ENCODE measurements at regions of chr10 and their contacts with region 1.

Region 1: GRCh38 chr10:89029785-89030437 is 39.3 kb downstream of the FAS start:
- DNase-seq: peak; percentile 78
- H3K4me3 Mint-ChIP-seq: no peak overlapping the region
- H3K27ac Mint-ChIP-seq: no peak overlapping the region
- H3K4me1 Mint-ChIP-seq: peaks cover 41% of the 10 kb centered on the region
- H3K27me3 Mint-ChIP-seq: no peaks in the 10 kb centered on the region

Region 2: GRCh38 chr10:88386821-88387773 is 642.8 kb before region 1 on chr10:
- CTCF ChIA-PET with region 1: no interaction called
- POLR2A ChIA-PET with region 1: no interaction called
- intact Hi-C with region 1: no loop called
- DNase-seq: no peak
- H3K4me3 Mint-ChIP-seq: no peak overlapping the region
- H3K27ac Mint-ChIP-seq: peak overlapping the region; percentile 42
- H3K4me1 Mint-ChIP-seq: peaks cover 16% of the 10 kb centered on the region
- H3K27me3 Mint-ChIP-seq: no peaks in the 10 kb centered on the region

Region 3: DNA sequence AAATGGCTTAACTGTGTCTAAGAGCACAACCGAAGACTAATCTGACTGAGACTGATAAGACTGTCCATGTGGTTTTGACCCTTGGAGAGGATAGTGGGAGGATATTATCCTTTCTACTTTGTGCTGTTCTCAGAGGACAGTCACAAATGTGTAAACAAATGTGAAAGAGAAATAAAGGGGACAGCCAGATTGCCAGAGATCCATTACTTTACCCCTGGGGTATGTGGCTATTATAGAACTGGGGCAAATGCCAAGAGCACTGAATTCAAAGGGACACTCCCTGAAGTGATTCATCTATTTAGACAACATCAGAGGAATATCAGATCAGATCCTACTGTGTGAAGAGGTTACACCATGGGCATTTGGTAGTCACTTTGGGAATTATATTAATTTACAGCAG is 601.5 kb before region 1 on chr10:
- CTCF ChIA-PET with region 1: no interaction called
- POLR2A ChIA-PET with region 1: no interaction called
- intact Hi-C with region 1: no loop called
- DNase-seq: no peak
- H3K4me3 Mint-ChIP-seq: no peak overlapping the region
- H3K27ac Mint-ChIP-seq: no peak overlapping the region
- H3K4me1 Mint-ChIP-seq: peaks cover 9% of the 10 kb centered on the region
- H3K27me3 Mint-ChIP-seq: no peaks in the 10 kb centered on the region

Region 4: DNA sequence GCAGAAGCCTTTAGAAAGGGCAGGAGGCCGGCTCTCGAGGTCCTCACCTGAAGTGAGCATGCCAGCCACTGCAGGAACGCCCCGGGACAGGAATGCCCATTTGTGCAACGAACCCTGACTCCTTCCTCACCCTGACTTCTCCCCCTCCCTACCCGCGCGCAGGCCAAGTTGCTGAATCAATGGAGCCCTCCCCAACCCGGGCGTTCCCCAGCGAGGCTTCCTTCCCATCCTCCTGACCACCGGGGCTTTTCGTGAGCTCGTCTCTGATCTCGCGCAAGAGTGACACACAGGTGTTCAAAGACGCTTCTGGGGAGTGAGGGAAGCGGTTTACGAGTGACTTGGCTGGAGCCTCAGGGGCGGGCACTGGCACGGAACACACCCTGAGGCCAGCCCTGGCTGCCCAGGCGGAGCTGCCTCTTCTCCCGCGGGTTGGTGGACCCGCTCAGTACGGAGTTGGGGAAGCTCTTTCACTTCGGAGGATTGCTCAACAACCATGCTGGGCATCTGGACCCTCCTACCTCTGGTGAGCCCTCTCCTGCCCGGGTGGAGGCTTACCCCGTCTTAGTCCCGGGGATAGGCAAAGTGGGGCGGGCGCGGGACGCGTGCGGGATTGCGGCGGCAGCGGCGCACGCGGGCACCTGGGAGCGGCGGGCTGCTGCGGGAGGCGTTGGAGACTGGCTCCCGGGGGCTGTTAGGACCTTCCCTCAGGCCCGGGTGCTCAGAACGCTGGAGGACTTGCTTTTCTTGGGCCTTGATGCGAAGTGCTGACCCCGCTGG is 39.3 kb before region 1 on chr10 and contains the start of gene FAS:
- CTCF ChIA-PET with region 1: interaction called, 10 read pairs
- POLR2A ChIA-PET with region 1: interaction called, 7 read pairs
- intact Hi-C with region 1: loop called (anchors 1 kb)
- DNase-seq: peak; percentile 94
- H3K4me3 Mint-ChIP-seq: peak within 1 kb of the TSS; percentile 86
- H3K27ac Mint-ChIP-seq: peak within 1 kb of the TSS; percentile 96
- H3K4me1 Mint-ChIP-seq: peaks cover 65% of the 10 kb centered on the region
- H3K27me3 Mint-ChIP-seq: no peaks in the 10 kb centered on the region
- total RNA-seq, gene FAS: 62.2 to 63.5 TPM

Region 5: GRCh38 chr10:89069589-89069988 is 39.7 kb after region 1 on chr10:
- CTCF ChIA-PET with region 1: interaction called, 10 read pairs
- POLR2A ChIA-PET with region 1: interaction called, 3 read pairs
- intact Hi-C with region 1: no loop called
- DNase-seq: no peak
- H3K4me3 Mint-ChIP-seq: no peak overlapping the region
- H3K27ac Mint-ChIP-seq: no peak overlapping the region
- H3K4me1 Mint-ChIP-seq: no peaks in the 10 kb centered on the region
- H3K27me3 Mint-ChIP-seq: peaks cover 8% of the 10 kb centered on the region

Region 6: GRCh38 chr10:89086801-89087521 is 57.0 kb after region 1 on chr10:
- CTCF ChIA-PET with region 1: interaction called, 8 read pairs
- POLR2A ChIA-PET with region 1: no interaction called
- intact Hi-C with region 1: loop called (anchors 1 kb)
- DNase-seq: peak; percentile 50
- H3K4me3 Mint-ChIP-seq: no peak overlapping the region
- H3K27ac Mint-ChIP-seq: no peak overlapping the region
- H3K4me1 Mint-ChIP-seq: peaks cover 8% of the 10 kb centered on the region
- H3K27me3 Mint-ChIP-seq: no peaks in the 10 kb centered on the region

Region 7: GRCh38 chr10:89163265-89163995 is 133.5 kb after region 1 on chr10:
- CTCF ChIA-PET with region 1: interaction called, 12 read pairs
- POLR2A ChIA-PET with region 1: no interaction called
- intact Hi-C with region 1: loop called (anchors 1 kb)
- DNase-seq: peak; percentile 76
- H3K4me3 Mint-ChIP-seq: peak overlapping the region; percentile 10
- H3K27ac Mint-ChIP-seq: peak overlapping the region; percentile 35
- H3K4me1 Mint-ChIP-seq: peaks cover 42% of the 10 kb centered on the region
- H3K27me3 Mint-ChIP-seq: peaks cover 15% of the 10 kb centered on the region

Region 8: DNA sequence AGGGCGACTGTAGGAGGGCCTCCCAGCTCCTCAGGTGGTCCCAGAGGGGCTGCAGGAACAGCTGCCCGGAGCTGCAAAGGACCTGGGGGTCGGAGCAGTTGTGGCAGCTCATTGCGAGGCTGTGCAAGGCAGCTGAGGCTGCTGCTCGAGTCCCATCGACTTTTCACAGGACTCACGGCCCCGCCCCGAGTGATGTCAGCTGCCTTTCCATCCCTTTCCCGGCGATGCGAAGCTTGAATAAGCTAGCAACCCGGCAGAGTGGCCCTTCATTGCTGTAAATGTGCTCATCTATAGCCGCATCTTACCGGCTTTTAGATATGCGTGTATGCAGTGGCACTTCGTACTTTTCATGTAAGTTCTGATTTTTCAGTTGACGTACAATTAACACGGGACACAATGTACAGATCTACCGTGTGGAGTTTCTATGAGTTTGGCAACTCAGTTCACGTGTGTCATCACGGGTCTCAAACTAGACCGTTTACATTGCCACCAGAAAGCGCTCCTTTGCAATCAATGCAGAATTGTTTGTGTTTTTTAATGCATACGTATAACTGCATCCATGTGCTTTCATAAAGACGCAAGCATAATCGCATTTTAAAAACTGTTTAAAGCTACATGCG is 177.4 kb after region 1 on chr10 and contains the start of gene CH25H:
- CTCF ChIA-PET with region 1: interaction called, 114 read pairs
- POLR2A ChIA-PET with region 1: no interaction called
- intact Hi-C with region 1: no loop called
- DNase-seq: peak; percentile 71
- H3K4me3 Mint-ChIP-seq: peak within 1 kb of the TSS; percentile 64
- H3K27ac Mint-ChIP-seq: no peak within 1 kb of the TSS
- H3K4me1 Mint-ChIP-seq: peaks cover 11% of the 10 kb centered on the region
- H3K27me3 Mint-ChIP-seq: peaks cover 29% of the 10 kb centered on the region
- total RNA-seq, gene CH25H: 0.12 TPM in 1 of 2 experiments, not detected in the other

Region 9: DNA sequence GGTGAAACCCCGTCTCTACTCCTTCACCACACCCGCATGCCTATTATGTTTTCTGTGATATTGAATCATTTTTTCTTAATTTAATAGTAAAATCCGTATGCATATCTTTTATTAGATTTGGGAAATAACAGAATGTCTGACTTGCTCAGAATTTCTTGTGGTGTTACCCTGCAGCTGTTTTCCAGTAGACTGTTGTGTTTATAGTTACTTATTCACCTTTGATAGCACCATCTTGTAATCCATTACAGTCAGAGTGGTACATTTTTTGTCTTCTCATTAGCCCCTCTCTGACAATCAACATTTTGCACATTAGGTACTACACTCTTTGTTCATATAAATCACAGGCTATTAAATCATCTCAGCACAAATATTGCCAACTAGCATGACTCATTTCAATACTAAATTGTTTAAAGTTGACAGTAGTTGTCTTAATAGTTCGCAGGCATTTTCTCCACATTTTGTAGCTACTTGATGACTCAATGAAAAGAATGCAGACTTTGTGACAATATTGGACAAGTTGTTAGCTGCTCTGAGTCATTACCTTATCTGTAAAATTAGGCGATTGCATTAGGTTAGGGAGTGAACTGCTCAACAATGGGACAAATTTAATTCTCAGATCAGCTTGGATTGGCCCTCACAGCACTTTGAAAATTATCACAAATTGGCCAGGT is 523.3 kb after region 1 on chr10:
- CTCF ChIA-PET with region 1: no interaction called
- POLR2A ChIA-PET with region 1: no interaction called
- intact Hi-C with region 1: loop called (anchors 10 kb)
- DNase-seq: no peak
- H3K4me3 Mint-ChIP-seq: no peak overlapping the region
- H3K27ac Mint-ChIP-seq: no peak overlapping the region
- H3K4me1 Mint-ChIP-seq: no peaks in the 10 kb centered on the region
- H3K27me3 Mint-ChIP-seq: peaks cover 5% of the 10 kb centered on the region

Region 10: GRCh38 chr10:89744026-89744425 is 714.1 kb after region 1 on chr10:
- CTCF ChIA-PET with region 1: no interaction called
- POLR2A ChIA-PET with region 1: no interaction called
- intact Hi-C with region 1: no loop called
- DNase-seq: no peak
- H3K4me3 Mint-ChIP-seq: no peak overlapping the region
- H3K27ac Mint-ChIP-seq: no peak overlapping the region
- H3K4me1 Mint-ChIP-seq: no peaks in the 10 kb centered on the region
- H3K27me3 Mint-ChIP-seq: no peaks in the 10 kb centered on the region

Measured in activated CD4-positive, alpha-beta memory T cell treated with anti-CD3 and anti-CD28 coated beads for 36 hours (primary cell).